Astrocyte of the cerebellum (primary cell): ENCODE measurements at regions of chrX and their contacts with region 1.

Region 1: GRCh38 chrX:108186811-108187210 is 95.2 kb downstream of the ATG4A start:
- DNase-seq: peak; percentile 80
- H3K4me3 ChIP-seq: no peak overlapping the region
- CTCF ChIP-seq: no peak

Region 2: DNA sequence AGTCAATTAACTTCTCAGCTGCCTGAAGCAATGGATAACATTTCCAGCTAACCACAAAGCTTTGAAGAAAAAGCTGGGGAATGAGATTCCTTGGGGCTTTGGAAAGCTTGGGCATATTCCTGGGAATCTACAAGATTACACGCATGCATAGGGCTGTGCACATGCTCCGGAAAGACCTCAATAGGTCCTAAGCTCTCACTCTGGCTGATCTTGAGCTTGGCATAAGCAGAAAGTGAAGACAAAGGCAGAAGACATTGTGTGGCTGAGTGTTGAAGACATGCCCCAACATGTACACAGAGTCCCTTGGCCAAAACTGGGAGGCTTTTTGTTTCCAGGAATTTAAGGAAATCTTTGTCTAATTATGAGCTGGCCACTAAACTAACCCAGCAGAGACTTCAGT is 64.1 kb before region 1 on chrX:
- in situ Hi-C with region 1: loop called (anchors 5 kb)
- DNase-seq: peak; percentile 9
- H3K4me3 ChIP-seq: no peak overlapping the region
- CTCF ChIP-seq: no peak

Region 3: DNA sequence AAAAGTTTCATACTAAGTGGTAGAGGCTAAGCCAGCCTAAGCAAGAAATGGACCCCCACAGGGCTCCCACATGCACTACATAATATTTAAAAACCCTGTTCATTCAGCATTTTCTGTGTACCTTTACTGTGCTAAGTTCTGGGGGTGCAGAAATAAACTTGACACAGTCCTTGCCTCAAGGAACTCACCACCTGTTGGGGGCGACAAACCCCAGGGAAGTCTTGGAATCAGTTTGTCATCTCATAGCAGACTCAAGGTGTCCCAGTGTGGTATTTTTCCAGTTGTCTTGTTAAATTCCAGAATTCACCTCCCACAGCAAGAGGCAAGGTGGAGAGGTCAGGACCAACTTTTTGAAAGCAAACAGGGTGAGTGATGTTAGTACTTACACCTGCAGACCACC is 52.1 kb before region 1 on chrX:
- in situ Hi-C with region 1: no loop called
- DNase-seq: no peak
- H3K4me3 ChIP-seq: no peak overlapping the region
- CTCF ChIP-seq: no peak